ENCODE measurements at regions of chr7 and their contacts with region 1.

Region 1: GRCh38 chr7:92006046-92006445 is 65.4 kb downstream of the AKAP9 start:
- DNase-seq: no peak
- ATAC-seq: no peak
- H3K4me3 ChIP-seq: no peak overlapping the region
- H3K4me3 Mint-ChIP-seq: no peak overlapping the region
- H3K27ac ChIP-seq: no peak overlapping the region
- H3K27ac Mint-ChIP-seq: no peak overlapping the region
- H3K4me1 ChIP-seq: no peaks in the 10 kb centered on the region
- H3K4me1 Mint-ChIP-seq: no peaks in the 10 kb centered on the region
- H3K27me3 ChIP-seq: no peaks in the 10 kb centered on the region
- H3K27me3 Mint-ChIP-seq: no peaks in the 10 kb centered on the region
- CTCF ChIP-seq: no peak

Region 2: DNA sequence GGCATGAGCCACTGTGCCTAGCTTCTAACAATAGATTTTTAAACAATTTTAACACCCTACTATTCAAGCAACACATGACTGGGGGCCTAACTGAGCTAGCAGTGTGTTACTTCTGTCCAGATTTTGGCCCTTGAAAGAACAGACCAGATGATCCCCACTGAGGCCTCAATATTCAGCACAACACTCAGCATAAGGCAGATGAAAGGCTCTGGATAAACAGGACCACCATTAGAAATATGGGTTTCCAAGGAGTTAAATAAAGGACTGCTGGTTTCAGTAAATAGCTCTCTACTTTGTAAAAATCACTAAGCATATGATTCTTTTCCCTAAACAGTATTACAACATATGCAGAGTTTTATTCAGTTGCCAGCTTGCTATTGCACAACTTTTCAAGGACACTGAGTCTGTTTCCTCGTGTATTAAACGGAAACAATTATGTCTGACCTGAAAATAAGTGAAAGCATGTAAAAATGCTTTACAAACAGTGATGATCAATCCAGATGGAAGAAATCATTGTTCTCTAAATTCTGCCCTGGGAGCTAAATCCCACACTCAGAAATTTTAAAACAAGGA is 765.6 kb before region 1 on chr7:
- CTCF ChIA-PET with region 1: no interaction called
- POLR2A ChIA-PET with region 1: no interaction called
- intact Hi-C with region 1: loop called in 1 of 2 experiments (anchors 5 kb)
- DNase-seq: no peak
- ATAC-seq: no peak
- H3K4me3 ChIP-seq: no peak overlapping the region
- H3K4me3 Mint-ChIP-seq: no peak overlapping the region
- H3K27ac ChIP-seq: no peak overlapping the region
- H3K27ac Mint-ChIP-seq: no peak overlapping the region
- H3K4me1 ChIP-seq: no peaks in the 10 kb centered on the region
- H3K4me1 Mint-ChIP-seq: no peaks in the 10 kb centered on the region
- H3K27me3 ChIP-seq: no peaks in the 10 kb centered on the region
- H3K27me3 Mint-ChIP-seq: peaks cover 2% of the 10 kb centered on the region
- CTCF ChIP-seq: no peak

Region 3: DNA sequence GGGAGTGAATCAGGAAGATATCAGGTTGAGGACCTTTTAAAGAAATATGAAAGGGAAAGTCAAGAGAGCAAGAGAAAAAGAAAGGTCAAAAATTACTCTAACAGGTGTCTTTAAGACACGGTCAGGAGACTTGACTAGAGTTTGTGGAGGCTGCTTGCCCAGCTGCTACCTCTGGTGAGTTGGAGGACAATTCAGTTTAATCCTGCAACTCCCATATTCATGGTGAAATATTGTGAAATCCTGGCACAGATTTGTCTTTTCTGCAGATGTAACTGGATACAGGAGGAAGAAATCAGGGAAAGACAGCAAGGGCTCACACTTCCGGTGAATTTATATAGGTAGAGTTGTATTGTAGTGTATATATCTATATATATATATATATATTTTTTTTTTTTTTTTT is 28.1 kb after region 1 on chr7:
- CTCF ChIA-PET with region 1: no interaction called
- POLR2A ChIA-PET with region 1: no interaction called
- intact Hi-C with region 1: no loop called
- DNase-seq: no peak
- ATAC-seq: no peak
- H3K4me3 ChIP-seq: no peak overlapping the region
- H3K4me3 Mint-ChIP-seq: no peak overlapping the region
- H3K27ac ChIP-seq: no peak overlapping the region
- H3K27ac Mint-ChIP-seq: no peak overlapping the region
- H3K4me1 ChIP-seq: no peaks in the 10 kb centered on the region
- H3K4me1 Mint-ChIP-seq: no peaks in the 10 kb centered on the region
- H3K27me3 ChIP-seq: no peaks in the 10 kb centered on the region
- H3K27me3 Mint-ChIP-seq: no peaks in the 10 kb centered on the region
- CTCF ChIP-seq: no peak

Measured in CD8-positive, alpha-beta T cell (primary cell).